ENCODE measurements at regions of chr1 and their contacts with region 1.

Region 1: DNA sequence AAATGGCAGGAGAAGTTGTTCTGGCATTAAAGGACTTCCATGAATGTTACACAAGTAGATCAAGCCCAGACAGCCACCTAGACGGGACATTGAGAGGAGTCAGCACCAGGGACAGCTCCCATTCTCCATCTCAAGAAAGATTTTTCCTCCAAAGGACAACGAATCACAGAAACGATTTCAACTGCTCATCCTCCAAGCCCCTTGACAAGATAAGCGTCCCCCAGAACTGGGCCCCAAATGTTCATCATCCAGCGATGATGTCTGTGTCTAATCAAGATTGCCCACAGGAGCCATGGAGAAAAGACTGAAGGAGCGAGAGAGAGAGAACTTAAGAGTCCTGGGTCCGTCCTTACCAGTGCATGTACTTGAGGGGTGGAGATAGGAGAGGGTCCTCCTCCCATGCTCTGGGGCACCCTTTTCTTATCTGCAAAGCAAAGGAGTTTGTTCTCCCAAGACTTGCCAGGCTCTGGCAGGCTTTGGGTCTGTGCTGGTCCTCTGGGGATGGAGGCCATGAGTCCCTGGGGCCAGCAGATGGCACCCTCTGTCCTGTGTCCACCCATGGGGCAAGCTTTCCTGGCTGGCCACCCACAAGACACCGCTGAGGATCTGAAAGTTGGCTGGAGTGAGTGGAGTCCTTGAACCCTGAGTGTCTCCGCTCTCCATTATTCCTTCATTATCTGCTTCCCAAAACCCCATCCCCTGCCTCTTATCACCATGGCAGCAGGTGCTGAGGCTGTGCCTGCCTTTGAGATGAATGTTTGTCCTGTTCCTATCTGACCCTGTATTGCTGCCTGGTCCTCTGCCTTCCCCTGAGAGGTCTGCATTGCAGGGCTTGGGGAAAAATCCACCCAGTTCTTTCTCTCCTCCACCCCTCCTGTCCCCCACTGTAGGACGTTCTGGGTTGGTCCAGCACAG is 164.6 kb downstream of the ACTL8 start:
- DNase-seq: no peak
- H3K4me3 ChIP-seq: no peak overlapping the region
- H3K4me3 Mint-ChIP-seq: no peak overlapping the region
- H3K27ac ChIP-seq: no peak overlapping the region
- H3K27ac Mint-ChIP-seq: no peak overlapping the region
- H3K4me1 ChIP-seq: no peaks in the 10 kb centered on the region
- H3K4me1 Mint-ChIP-seq: no peaks in the 10 kb centered on the region
- H3K27me3 ChIP-seq: no peaks in the 10 kb centered on the region
- H3K27me3 Mint-ChIP-seq: peaks cover 12 to 21% of the 10 kb centered on the region in 2 donors

Region 2: GRCh38 chr1:17465228-17465627 is 454.6 kb before region 1 on chr1:
- CTCF ChIA-PET with region 1: no interaction called
- POLR2A ChIA-PET with region 1: no interaction called
- intact Hi-C with region 1: no loop called
- DNase-seq: no peak
- H3K4me3 ChIP-seq: no peak overlapping the region
- H3K4me3 Mint-ChIP-seq: no peak overlapping the region
- H3K27ac ChIP-seq: no peak overlapping the region
- H3K27ac Mint-ChIP-seq: peak overlapping the region in 1 of 7 donors; percentile 81
- H3K4me1 ChIP-seq: no peaks in the 10 kb centered on the region
- H3K4me1 Mint-ChIP-seq: no peaks in the 10 kb centered on the region
- H3K27me3 ChIP-seq: no peaks in the 10 kb centered on the region
- H3K27me3 Mint-ChIP-seq: peaks cover 0 to 1% of the 10 kb centered on the region in 2 donors

Region 3: DNA sequence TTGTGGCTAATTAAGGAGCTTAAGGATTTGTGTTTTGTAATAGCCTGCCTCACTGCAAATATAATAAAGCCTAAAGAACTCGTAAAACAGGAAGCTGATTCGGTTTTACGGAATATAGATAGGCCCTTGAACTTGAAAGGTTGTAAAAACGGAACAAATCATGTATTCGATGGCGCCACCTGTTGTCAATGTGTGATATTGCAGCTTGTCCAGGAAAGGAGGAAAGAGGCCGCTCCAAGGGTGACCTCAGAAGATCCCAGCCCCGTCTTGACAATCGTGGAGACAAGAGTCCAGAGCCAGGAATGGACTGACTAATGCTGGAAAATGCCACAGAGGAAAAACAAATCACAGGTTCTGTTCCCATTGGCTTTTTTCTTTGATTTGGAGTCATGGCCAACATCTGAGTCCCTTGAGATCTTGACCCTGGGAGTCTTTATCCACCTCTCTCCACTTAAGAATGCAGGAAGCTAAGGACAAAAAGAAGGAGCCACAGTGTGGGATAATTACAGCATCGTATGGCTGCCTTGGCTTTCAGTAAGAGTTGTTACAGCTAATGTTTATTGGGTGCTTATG is 180.8 kb after region 1 on chr1:
- CTCF ChIA-PET with region 1: interaction called, 4 read pairs
- POLR2A ChIA-PET with region 1: no interaction called
- intact Hi-C with region 1: loop called (anchors 2 kb)
- DNase-seq: peak in 4 of 5 donors; percentile 10 to 24 (median 14)
- H3K4me3 ChIP-seq: no peak overlapping the region
- H3K4me3 Mint-ChIP-seq: no peak overlapping the region
- H3K27ac ChIP-seq: no peak overlapping the region
- H3K27ac Mint-ChIP-seq: no peak overlapping the region
- H3K4me1 ChIP-seq: no peaks in the 10 kb centered on the region
- H3K4me1 Mint-ChIP-seq: no peaks in the 10 kb centered on the region
- H3K27me3 ChIP-seq: no peaks in the 10 kb centered on the region
- H3K27me3 Mint-ChIP-seq: peaks cover 14 to 19% of the 10 kb centered on the region in 2 donors

Measured in CD4-positive, alpha-beta memory T cell (primary cell).